Mucosa of descending colon (tissue), 3 donors: ENCODE measurements at regions of chr5 and their contacts with region 1.

Region 1: DNA sequence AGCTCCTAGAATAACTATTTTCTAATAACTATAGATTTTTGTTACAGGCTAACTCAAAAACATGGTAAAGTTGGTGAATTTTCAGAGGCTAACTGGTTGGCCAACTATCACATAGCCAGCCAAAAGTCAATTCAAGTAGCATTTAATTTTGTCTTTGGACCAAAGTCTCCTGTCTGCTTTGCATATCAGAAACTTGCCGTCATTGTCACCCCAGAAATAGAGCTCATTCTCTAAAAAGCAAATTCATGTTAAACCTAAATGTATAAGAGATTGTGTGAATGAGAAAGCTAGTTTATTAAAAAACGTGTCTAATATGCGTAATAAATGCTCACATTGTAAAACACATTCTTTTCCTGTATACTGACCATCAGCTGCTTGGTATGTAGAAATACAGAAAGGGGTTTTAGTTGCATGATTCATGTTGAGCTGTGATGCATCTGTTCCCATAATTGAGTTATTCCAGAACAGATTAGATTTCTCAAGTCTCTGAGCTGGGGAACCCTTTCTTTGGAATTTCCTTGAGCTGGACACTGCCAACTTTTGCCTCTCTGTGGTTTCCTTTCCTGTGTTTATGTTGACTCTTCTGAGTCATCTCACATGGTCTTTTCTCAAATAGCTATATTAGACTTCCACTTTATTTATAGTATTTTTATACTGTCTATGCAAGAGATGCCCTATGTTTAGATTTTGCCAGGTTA is 7.3 kb downstream of the SRFBP1 start:
- DNase-seq: no peak
- ATAC-seq: peak; percentile 66
- H3K4me3 ChIP-seq: no peak overlapping the region
- H3K4me1 ChIP-seq: no peaks in the 10 kb centered on the region
- CTCF ChIP-seq: no peak

Region 2: DNA sequence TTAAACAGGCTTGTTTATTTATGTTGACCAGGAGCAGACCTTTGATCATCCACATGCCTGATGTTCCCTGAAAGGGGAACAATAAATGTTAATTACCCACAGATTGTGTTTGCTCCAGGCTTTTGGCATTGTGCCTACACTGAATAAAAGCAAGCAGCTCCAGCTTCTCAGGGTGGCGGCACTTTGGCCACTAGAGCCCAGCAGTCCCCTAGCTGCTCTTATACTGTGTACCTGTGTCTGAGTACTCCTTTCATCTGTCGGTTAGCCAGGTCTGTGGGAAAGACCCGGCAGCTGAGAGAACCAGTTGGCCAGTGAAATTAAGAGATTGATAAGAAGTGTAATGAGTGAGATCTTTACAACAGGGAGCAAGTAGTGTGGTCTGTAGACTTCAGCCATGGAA is 372.2 kb before region 1 on chr5:
- intact Hi-C with region 1: no loop called
- DNase-seq: peak in 2 of 3 donors; percentile 6 to 24
- ATAC-seq: peak; percentile 70
- H3K4me3 ChIP-seq: no peak overlapping the region
- H3K4me1 ChIP-seq: no peaks in the 10 kb centered on the region
- CTCF ChIP-seq: no peak

Region 3: GRCh38 chr5:122030251-122030650 is 61.2 kb after region 1 on chr5:
- intact Hi-C with region 1: no loop called
- DNase-seq: no peak
- ATAC-seq: no peak
- H3K4me3 ChIP-seq: no peak overlapping the region
- H3K4me1 ChIP-seq: no peaks in the 10 kb centered on the region
- CTCF ChIP-seq: no peak

Region 4: DNA sequence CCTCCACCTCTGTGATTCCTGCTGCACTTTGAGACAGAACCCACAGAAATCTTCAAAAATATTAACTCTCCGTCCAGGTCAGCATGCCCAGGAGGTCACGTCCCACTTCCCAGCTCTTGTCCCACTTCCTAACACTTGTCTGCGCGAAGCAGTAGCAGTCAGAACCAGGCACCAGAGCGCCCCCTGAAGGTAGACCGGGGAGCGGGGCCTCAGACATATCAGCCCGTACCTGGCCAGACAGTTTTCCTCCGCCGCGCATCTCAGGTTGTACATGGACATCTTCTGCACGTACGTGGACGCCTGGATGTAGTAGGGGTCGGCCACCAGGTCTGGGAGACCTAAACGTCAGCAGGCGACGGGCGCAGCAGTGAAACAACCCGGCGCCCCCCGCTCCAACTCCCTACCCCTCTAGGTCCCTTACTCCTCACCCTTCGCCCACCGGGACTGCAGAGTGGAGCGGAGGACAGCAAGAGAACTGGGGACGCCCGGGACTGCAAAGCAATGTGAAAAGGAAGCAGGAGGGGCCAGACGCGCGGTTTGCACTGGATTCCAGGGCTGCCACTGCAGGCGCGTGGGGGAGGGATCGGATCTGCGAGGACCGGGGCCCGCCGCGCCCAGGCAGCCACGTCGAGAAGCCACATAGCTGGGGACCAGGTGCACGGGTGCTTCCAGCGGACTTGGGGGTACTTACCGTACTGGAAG is 107.8 kb after region 1 on chr5:
- intact Hi-C with region 1: loop called in 1 of 2 experiments (anchors 5 kb)
- DNase-seq: peak; percentile 76 to 85 (median 83)
- ATAC-seq: peak; percentile 87
- H3K4me3 ChIP-seq: no peak overlapping the region
- H3K4me1 ChIP-seq: peaks cover 15% of the 10 kb centered on the region
- CTCF ChIP-seq: peak; percentile 35